ENCODE measurements at regions of chr5 and their contacts with region 1.

Region 1: GRCh38 chr5:38556599-38557305 is at the start of gene LIFR:
- DNase-seq: peak; percentile 37
- H3K4me3 Mint-ChIP-seq: peak within 1 kb of the TSS; percentile 83
- H3K27ac Mint-ChIP-seq: no peak within 1 kb of the TSS
- H3K4me1 Mint-ChIP-seq: peaks cover 11% of the 10 kb centered on the region
- H3K27me3 Mint-ChIP-seq: peaks cover 67% of the 10 kb centered on the region
- total RNA-seq, gene LIFR: 0.25 TPM in 1 of 2 replicates, not detected in the other

Region 2: DNA sequence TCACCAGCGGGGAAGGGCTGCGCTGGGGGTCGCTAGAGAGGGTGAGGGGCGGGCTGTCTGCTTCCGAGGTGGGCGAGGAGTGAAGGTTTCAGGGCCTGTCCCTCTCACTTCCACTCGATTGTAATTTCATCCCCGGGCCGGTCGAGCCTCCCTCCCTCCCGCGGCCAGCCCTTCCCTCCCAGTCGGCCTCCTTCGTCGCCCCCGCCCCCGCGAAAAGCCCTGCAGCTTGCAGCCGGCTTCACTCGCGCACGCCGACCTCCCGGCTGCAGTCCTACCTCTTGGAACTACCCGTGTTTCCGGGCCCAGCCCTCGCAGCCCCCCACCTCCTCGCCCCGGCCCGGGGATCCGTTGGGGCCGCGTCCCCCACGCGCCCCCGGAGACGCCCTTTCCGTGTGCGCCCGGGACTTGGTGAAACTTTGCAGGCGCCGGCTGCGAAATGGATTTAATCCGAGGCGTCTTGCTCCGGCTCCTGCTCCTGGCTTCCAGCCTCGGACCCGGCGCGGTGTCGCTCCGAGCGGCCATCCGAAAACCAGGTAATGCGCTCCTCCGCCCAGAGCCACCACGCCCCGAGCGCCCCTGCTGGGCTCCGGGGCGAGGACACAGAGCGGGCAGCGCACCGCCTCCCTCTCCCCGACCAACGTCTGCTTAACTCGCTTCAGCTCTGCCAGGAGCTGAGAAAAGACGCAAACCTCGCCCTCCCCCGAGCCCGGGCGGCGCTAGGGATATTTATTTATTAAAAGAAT is 298.3 kb before region 1 on chr5 and contains the start of gene EGFLAM:
- intact Hi-C with region 1: loop called (anchors 10 kb)
- DNase-seq: no peak
- H3K4me3 Mint-ChIP-seq: no peak within 1 kb of the TSS
- H3K27ac Mint-ChIP-seq: no peak within 1 kb of the TSS
- H3K4me1 Mint-ChIP-seq: peaks cover 5% of the 10 kb centered on the region
- H3K27me3 Mint-ChIP-seq: peaks cover 68% of the 10 kb centered on the region
- total RNA-seq, gene EGFLAM: not detected in 2 replicates

Region 3: GRCh38 chr5:38598994-38599611 is 42.4 kb after region 1 on chr5:
- intact Hi-C with region 1: no loop called
- DNase-seq: no peak
- H3K4me3 Mint-ChIP-seq: no peak overlapping the region
- H3K27ac Mint-ChIP-seq: no peak overlapping the region
- H3K4me1 Mint-ChIP-seq: no peaks in the 10 kb centered on the region
- H3K27me3 Mint-ChIP-seq: peaks cover 2% of the 10 kb centered on the region

Region 4: GRCh38 chr5:38809388-38810359 is 252.9 kb after region 1 on chr5:
- intact Hi-C with region 1: loop called (anchors 5 kb)
- DNase-seq: peak; percentile 24
- H3K4me3 Mint-ChIP-seq: no peak overlapping the region
- H3K27ac Mint-ChIP-seq: no peak overlapping the region
- H3K4me1 Mint-ChIP-seq: peaks cover 10% of the 10 kb centered on the region
- H3K27me3 Mint-ChIP-seq: peaks cover 14% of the 10 kb centered on the region

Measured in activated T-helper 2 cell treated with anti-CD3 and anti-CD28 coated beads, Interferon-gamma antibody, Interleukin-2, Interleukin-4, amounts not matched to agents 10 μg/mL and 5 μg/mL and 100 μg/mL, durations not matched to agents 14 hours and 24 hours and 36 hours (primary cell).